Thyroid gland (tissue), 4 donors: ENCODE measurements at regions of chr7 and their contacts with region 1.

Region 1: GRCh38 chr7:97104719-97105238 is 12.7 kb upstream of the SDHAF3 start:
- DNase-seq: peak; percentile 85 to 90
- H3K4me3 ChIP-seq: no peak overlapping the region
- H3K27ac ChIP-seq: no peak overlapping the region
- H3K4me1 ChIP-seq: peaks cover 0 to 3% of the 10 kb centered on the region in 2 donors
- H3K27me3 ChIP-seq: no peaks in the 10 kb centered on the region
- CTCF ChIP-seq: peak; percentile 28 to 91 (median 76)
- POLR2A ChIP-seq: no peak

Region 2: DNA sequence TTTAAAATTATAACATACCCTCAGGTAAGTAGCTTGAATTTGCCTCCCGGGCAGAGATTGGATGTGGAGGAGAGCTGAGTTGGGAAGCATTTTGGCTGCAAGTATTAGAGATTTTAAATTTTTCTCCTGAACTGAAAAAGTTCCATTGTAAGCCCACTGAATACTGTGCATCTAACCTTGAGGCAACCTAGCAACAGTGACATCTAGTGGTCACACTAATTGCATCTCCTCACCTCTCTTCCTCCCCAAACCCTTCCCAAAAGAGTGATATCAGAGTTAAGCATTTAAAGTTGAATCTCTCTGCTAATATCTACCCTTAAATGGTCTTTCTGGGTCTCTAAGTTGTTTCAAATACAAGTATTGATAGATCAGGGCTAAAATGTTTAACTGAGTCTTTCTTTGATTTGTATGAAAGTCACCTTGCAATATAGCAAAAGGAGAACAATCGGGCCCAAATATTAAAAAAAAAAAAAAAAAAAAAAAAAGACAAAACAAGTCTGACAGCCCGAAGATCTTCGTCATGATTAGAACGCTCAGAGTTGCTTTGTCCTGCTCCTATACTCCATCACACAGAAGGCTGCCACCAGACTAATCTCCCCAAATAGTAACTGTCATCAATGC is 39.7 kb before region 1 on chr7:
- intact Hi-C with region 1: no loop called
- DNase-seq: peak in 1 of 2 donors; percentile 3
- H3K4me3 ChIP-seq: no peak overlapping the region
- H3K27ac ChIP-seq: no peak overlapping the region
- H3K4me1 ChIP-seq: no peaks in the 10 kb centered on the region
- H3K27me3 ChIP-seq: no peaks in the 10 kb centered on the region
- CTCF ChIP-seq: peak; percentile 41 to 74 (median 46)
- POLR2A ChIP-seq: no peak

Region 3: DNA sequence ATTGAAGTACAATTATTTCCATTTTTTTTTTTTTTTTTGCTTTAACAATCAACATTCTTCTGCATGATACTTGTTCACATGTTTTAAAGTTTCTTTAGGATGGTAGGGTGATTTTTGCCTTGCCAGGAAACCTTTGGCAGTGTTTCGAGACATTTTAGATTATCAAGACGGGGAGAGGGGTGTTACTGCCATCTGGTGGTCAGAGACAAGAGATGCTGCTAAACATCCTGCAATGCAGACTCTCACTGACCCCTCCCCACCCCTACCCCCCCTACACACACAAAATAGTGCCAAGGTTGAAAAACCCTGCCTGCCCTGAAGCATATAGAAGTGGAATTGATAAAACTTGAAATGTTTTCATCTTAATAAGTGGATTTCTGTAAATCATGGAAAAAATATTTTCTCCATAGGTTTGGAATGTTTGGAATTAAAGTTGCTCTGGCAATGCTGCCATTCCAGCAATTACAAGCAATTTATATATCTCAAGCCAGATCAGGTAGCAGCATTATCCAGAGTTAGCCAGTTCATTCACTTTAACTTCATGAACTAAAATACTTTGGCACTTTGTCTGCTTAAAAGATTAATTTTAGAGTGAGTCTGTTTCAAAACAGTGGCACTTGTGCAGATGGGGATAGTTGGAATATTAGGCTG is 74.8 kb after region 1 on chr7:
- intact Hi-C with region 1: loop called (anchors 2 kb)
- DNase-seq: peak; percentile 36 to 46
- H3K4me3 ChIP-seq: no peak overlapping the region
- H3K27ac ChIP-seq: no peak overlapping the region
- H3K4me1 ChIP-seq: no peaks in the 10 kb centered on the region
- H3K27me3 ChIP-seq: no peaks in the 10 kb centered on the region
- CTCF ChIP-seq: peak; percentile 20 to 83 (median 50)
- POLR2A ChIP-seq: no peak

Region 4: GRCh38 chr7:97835296-97836138 is 730.7 kb after region 1 on chr7:
- intact Hi-C with region 1: loop called (anchors 5 kb)
- DNase-seq: peak; percentile 63 to 69
- H3K4me3 ChIP-seq: no peak overlapping the region
- H3K27ac ChIP-seq: no peak overlapping the region
- H3K4me1 ChIP-seq: no peaks in the 10 kb centered on the region
- H3K27me3 ChIP-seq: no peaks in the 10 kb centered on the region
- CTCF ChIP-seq: peak in 4 of 6 experiments; percentile 29 to 65 (median 40)
- POLR2A ChIP-seq: no peak